IMR-90 (cell line): ENCODE measurements at regions of chr6 and their contacts with region 1.

Region 1: GRCh38 chr6:53986165-53986720 is 125.0 kb upstream of the MLIP start:
- DNase-seq: peak; percentile 70
- ATAC-seq: peak; percentile 63; the same call in 1 of the 2 replicates
- H3K4me3 ChIP-seq: no peak overlapping the region
- H3K27ac ChIP-seq: no peak overlapping the region
- H3K4me1 ChIP-seq: peaks cover 7% of the 10 kb centered on the region
- H3K27me3 ChIP-seq: no peaks in the 10 kb centered on the region
- CTCF ChIP-seq: peak; percentile 92
- POLR2A ChIP-seq: no peak
- RAD21 ChIP-seq: peak; percentile 93

Region 2: GRCh38 chr6:54267798-54268197 is 281.6 kb after region 1 on chr6:
- CTCF ChIA-PET with region 1: interaction called, 5 read pairs
- POLR2A ChIA-PET with region 1: no interaction called
- dilution Hi-C with region 1: no loop called
- in situ Hi-C with region 1: loop called (anchors 5 kb)
- intact Hi-C with region 1: loop called (anchors 1 kb)
- DNase-seq: peak; percentile 60
- ATAC-seq: peak; percentile 73
- H3K4me3 ChIP-seq: no peak overlapping the region
- H3K27ac ChIP-seq: no peak overlapping the region
- H3K4me1 ChIP-seq: no peaks in the 10 kb centered on the region
- H3K27me3 ChIP-seq: no peaks in the 10 kb centered on the region
- CTCF ChIP-seq: peak; percentile 54
- POLR2A ChIP-seq: no peak
- RAD21 ChIP-seq: peak; percentile 50

Region 3: DNA sequence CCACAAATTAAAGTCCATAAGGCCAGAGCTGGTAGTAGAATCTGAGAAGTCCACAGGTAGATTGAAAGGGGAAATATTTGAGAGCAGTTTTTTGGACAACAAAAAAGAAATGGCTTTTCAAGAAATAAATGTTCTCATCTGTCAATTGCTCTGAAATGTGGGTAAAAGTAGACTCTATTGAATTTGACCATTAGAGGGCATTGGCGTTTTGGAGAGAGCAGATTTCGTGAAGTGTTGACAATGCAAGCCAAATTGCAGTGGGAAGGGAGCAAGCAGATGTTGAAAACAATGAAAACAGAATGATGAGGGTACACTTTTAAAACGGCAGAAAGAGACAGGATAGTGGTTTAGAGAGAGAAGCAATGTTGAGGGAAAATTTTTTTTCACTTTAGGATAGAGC is 711.2 kb after region 1 on chr6:
- CTCF ChIA-PET with region 1: no interaction called
- POLR2A ChIA-PET with region 1: no interaction called
- dilution Hi-C with region 1: no loop called
- in situ Hi-C with region 1: loop called (anchors 25 kb)
- intact Hi-C with region 1: loop called (anchors 5 kb)
- DNase-seq: peak; percentile 16
- ATAC-seq: peak; percentile 64; the same call in 1 of the 2 replicates
- H3K4me3 ChIP-seq: no peak overlapping the region
- H3K27ac ChIP-seq: no peak overlapping the region
- H3K4me1 ChIP-seq: no peaks in the 10 kb centered on the region
- H3K27me3 ChIP-seq: no peaks in the 10 kb centered on the region
- CTCF ChIP-seq: peak; percentile 43
- POLR2A ChIP-seq: no peak
- RAD21 ChIP-seq: peak; percentile 47

Region 4: DNA sequence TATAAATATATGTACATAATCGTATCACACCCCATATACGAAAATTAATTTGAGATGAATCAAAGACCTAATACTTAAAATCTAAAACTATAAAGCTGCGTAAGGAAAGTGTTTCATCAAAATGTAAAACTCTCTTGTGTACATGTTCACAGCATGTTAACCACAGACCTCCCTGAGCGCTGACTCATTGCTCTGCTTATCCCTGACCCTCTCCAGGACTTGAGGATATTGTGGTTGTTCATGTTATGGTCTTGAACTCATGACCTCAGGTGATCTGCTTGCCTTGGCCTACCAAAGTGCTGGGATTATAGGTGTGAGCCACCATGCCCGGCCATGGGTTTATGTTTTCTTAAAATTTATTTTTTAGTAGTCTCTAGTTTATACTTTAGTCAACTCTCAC is 874.5 kb after region 1 on chr6:
- CTCF ChIA-PET with region 1: no interaction called
- POLR2A ChIA-PET with region 1: no interaction called
- dilution Hi-C with region 1: no loop called
- in situ Hi-C with region 1: loop called (anchors 25 kb)
- intact Hi-C with region 1: no loop called
- DNase-seq: peak; percentile 72
- ATAC-seq: peak; percentile 67
- H3K4me3 ChIP-seq: no peak overlapping the region
- H3K27ac ChIP-seq: no peak overlapping the region
- H3K4me1 ChIP-seq: no peaks in the 10 kb centered on the region
- H3K27me3 ChIP-seq: no peaks in the 10 kb centered on the region
- CTCF ChIP-seq: no peak
- POLR2A ChIP-seq: no peak
- RAD21 ChIP-seq: no peak

Region 5: GRCh38 chr6:55239099-55239498 is 1252.9 kb after region 1 on chr6:
- CTCF ChIA-PET with region 1: no interaction called
- POLR2A ChIA-PET with region 1: no interaction called
- dilution Hi-C with region 1: no loop called
- in situ Hi-C with region 1: loop called (anchors 5 kb)
- intact Hi-C with region 1: loop called (anchors 2 kb)
- DNase-seq: no peak
- ATAC-seq: no peak
- H3K4me3 ChIP-seq: no peak overlapping the region
- H3K27ac ChIP-seq: no peak overlapping the region
- H3K4me1 ChIP-seq: no peaks in the 10 kb centered on the region
- H3K27me3 ChIP-seq: no peaks in the 10 kb centered on the region
- CTCF ChIP-seq: no peak
- POLR2A ChIP-seq: no peak
- RAD21 ChIP-seq: no peak